ENCODE measurements at regions of chr11 and their contacts with region 1.

Region 1: DNA sequence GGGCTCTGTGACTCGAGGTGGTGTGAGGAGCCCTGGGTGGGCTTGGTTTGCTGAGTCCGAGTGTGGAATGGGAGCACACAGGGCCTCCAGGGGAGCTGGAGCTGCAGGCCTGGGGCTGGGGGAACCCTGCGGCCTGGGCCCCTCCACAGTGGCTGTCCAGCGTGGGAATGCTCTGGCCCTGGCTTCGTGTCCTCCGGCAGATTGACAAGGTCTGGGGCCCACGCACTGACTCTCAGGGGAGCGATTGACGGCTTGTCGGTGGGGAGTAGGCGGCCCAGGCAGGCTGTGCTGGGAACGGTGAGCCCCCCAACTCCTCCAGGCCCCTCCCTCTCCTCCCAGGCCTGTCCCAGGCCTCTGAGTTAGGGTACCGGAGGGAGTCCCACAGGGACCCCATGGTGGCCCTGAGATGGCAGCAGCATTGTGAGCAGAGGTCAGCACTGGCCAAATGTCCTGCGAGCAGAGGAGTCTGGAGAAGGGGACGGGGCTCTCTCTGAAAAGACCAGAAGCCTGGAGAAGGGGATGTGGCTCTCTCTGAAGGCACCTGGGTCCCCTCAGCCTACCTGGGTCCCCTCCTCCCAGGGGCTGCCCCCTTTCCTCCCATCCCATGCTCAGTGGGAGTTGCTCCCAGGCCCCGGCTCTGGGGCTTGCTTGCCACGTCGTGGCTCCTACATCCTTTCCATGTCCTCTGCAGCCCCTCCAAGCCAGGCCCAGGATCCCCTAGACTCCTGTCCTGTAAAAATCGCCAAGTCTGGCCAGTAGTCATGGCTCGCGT is 23.8 kb upstream of the MYEOV start:
- DNase-seq: no peak
- ATAC-seq: no peak
- H3K4me3 ChIP-seq: no peak overlapping the region
- H3K4me3 Mint-ChIP-seq: no peak overlapping the region
- H3K27ac ChIP-seq: no peak overlapping the region
- H3K27ac Mint-ChIP-seq: no peak overlapping the region
- H3K4me1 ChIP-seq: no peaks in the 10 kb centered on the region
- H3K4me1 Mint-ChIP-seq: no peaks in the 10 kb centered on the region
- H3K27me3 ChIP-seq: peaks cover 0 to 14% of the 10 kb centered on the region in 2 experiments
- H3K27me3 Mint-ChIP-seq: peaks cover 0 to 2% of the 10 kb centered on the region in 2 donors

Region 2: DNA sequence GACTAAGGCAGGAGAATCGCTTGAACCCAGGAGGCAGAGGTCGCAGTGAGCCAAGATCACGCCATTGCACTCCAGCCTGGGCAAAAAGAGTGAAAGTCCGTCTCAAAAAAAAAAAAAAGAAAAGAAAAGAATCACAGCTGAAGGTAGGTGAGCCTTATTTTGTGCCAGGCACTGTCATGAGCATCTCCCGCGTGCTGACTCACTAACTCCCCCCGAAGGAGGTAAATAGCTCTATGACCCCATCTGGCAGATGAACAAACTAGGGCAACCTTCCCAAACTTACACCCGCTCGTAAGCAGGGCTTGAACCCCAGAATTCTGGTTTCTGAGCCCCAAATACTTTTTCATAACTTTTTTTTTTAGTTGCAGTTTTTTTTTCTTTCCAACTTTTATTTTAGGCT is 868.3 kb after region 1 on chr11:
- CTCF ChIA-PET with region 1: interaction called in 1 of 2 experiments, 10 read pairs
- POLR2A ChIA-PET with region 1: no interaction called
- DNase-seq: no peak
- ATAC-seq: no peak
- H3K4me3 ChIP-seq: no peak overlapping the region
- H3K4me3 Mint-ChIP-seq: no peak overlapping the region
- H3K27ac ChIP-seq: no peak overlapping the region
- H3K27ac Mint-ChIP-seq: no peak overlapping the region
- H3K4me1 ChIP-seq: no peaks in the 10 kb centered on the region
- H3K4me1 Mint-ChIP-seq: peaks cover 1 to 6% (median 5%) of the 10 kb centered on the region in 3 donors
- H3K27me3 ChIP-seq: peaks cover 3 to 34% of the 10 kb centered on the region in 2 experiments
- H3K27me3 Mint-ChIP-seq: peaks cover 23 to 37% of the 10 kb centered on the region in 2 donors